HEK293T (cell line): ENCODE measurements at regions of chr12 and their contacts with region 1.

Region 1: GRCh38 chr12:54993161-54993835 is 8.7 kb upstream of the TESPA1 start:
- DNase-seq: peak; percentile 66

Region 2: GRCh38 chr12:55073043-55074022 is 80.0 kb after region 1 on chr12:
- CTCF ChIA-PET with region 1: interaction called, 51 read pairs
- POLR2A ChIA-PET with region 1: no interaction called
- DNase-seq: peak; percentile 59

Region 3: GRCh38 chr12:55142669-55143565 is 149.6 kb after region 1 on chr12:
- CTCF ChIA-PET with region 1: interaction called, 15 read pairs
- POLR2A ChIA-PET with region 1: no interaction called
- DNase-seq: peak; percentile 44

Region 4: DNA sequence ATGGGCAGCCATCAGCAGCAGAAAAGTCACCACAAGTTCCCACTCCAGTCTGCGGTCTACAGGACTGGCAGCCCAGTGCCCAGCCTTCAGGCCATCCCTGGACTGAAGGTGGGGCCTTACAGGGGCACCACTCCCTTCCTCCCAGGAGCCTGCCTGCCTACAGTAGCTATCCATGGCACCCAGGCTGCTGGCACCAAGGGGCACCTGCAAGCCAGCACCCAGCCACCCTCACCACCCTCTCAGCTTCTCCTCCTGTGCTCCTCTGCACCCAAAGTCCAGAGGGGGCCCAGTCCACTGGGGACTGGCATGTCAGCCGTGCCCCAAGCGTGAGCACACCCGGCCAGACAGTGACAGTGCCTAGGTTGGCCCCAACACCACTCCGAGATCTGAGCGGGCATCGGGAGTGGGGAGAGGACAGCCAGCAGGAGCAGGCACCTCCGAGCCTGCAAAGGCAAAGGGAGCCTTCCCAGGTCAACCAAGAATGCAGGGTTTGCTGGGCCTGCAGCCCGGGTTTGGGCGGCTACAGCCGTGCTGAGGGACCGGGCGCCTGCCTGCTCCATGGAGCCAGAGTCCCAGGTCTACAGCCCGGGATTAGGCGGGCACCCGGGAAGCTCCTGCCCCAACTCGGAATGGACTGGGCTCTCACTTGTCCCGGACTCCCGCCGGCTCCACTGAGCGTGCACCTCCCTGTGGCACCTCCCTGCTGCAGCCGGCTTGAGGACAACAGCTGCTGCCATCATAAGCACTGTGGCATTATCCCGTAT is 398.9 kb after region 1 on chr12:
- CTCF ChIA-PET with region 1: no interaction called
- POLR2A ChIA-PET with region 1: no interaction called
- DNase-seq: no peak